Activated CD4-positive, alpha-beta T cell treated with anti-CD3 and anti-CD28 coated beads for 36 hours (primary cell): ENCODE measurements at regions of chr12 and their contacts with region 1.

Region 1: DNA sequence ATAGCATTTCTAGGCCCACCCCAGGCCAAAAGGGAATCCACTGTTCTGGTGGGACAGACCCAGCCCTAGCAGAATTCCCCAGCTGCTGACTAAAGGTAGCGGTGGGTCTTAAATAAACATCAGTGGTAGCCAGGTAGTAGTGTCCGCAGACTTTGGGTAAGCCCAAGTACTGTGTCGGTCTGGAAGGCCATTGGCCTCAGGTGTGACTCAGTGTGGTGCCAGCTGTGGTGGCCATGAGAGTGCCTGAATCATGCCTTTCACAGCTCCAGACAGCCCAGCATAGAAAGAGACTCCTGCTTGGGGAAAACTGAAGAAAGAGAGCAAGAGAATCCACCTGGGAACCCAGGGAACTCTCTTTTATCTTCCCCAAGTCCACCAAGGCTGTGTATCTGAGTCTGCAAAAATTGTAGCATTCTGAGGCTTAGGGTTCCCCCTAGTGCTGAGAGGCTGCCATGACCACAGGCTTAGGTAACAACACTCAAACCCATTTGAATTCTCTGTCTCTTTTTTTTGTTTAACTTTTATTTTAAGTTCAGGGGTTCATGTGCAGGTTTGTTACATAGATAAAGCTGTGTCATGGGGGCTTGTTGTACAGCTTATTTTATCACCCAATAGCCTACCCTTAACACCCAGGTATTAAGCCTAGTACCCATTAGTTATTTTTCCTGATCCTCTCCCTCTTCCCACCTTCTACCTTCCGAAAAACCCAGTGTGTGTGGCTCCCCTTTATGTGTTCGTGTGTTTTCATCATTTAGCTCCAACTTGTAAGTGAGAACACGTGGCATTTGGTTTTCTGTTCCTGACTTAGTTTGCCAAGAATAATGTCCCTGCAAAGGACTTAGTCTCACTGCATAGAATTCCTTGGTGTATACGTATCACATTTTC is 16.7 kb upstream of the CD163L1 start:
- DNase-seq: peak; percentile 71
- ATAC-seq: peak; percentile 79
- H3K4me3 Mint-ChIP-seq: no peak overlapping the region
- H3K27ac Mint-ChIP-seq: no peak overlapping the region
- H3K4me1 Mint-ChIP-seq: no peaks in the 10 kb centered on the region
- H3K27me3 Mint-ChIP-seq: peaks cover 3% of the 10 kb centered on the region

Region 2: DNA sequence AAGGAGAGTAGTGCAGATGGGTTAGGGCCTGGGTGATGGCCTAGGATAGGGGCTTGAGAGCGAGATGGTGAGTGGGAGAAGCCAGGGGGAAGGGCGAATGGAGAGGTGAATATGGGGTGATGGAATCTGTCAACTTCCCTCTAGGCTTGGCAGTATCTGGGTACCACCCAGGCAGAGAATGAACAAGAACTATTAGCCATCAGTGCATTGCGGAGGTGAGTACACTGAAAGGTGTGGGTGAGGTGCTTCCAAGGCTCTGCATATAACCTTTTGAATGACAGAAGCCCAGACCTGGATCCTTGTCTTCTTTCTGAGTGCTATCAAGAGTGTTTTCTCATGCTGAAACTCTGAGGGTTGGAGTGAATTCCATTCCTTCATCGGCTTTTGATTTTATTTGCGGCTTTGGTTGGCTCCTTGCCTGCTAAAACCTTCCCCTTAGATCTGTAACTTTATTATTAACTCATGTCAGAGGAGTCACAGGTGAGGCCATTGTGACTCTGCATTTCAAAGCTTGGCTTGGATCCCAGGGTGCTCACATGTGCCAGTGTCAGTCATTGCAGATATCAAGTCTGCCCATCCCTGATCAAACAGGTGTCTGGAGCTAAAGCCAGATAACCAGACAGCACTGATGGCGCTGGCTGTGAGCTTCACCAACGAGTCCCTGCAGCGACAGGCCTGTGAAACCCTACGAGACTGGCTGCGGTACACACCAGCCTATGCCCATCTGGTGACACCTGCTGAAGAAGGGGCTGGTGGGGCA is 252.6 kb before region 1 on chr12:
- CTCF ChIA-PET with region 1: no interaction called
- POLR2A ChIA-PET with region 1: no interaction called
- intact Hi-C with region 1: no loop called
- DNase-seq: no peak
- ATAC-seq: no peak
- H3K4me3 Mint-ChIP-seq: no peak overlapping the region
- H3K27ac Mint-ChIP-seq: no peak overlapping the region
- H3K4me1 Mint-ChIP-seq: no peaks in the 10 kb centered on the region
- H3K27me3 Mint-ChIP-seq: no peaks in the 10 kb centered on the region

Region 3: DNA sequence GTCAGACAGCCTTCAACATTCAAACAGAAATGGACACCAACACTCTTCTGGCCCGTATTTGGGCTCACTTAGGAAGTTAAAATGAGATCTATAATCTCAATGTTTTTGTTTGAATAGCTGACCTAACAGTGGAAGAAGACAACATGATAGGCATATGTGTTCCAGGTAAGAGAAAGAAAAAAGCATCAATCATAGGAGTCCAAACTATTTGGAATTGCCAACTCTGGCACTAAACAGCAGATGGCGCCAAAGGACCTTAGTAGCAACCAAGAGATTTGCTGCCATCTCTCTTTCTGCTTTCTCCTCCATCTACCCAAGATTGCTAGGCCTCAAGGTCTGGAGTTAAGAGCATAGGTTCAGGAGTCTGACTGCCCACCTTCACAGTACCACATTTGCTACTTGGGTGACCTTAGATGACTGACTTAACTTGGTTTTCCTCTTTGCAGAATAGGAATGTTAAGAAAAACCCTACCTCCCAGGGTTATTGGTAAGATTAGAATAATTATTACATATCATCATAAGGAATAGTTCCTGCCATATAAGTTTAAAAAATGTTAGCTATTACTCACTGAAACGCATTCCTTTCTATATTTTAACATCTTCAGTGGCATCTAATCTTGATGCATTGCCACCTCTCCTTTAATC is 240.9 kb before region 1 on chr12:
- CTCF ChIA-PET with region 1: interaction called, 8 read pairs
- POLR2A ChIA-PET with region 1: no interaction called
- intact Hi-C with region 1: loop called (anchors 1 kb)
- DNase-seq: peak; percentile 85
- ATAC-seq: peak; percentile 66
- H3K4me3 Mint-ChIP-seq: no peak overlapping the region
- H3K27ac Mint-ChIP-seq: no peak overlapping the region
- H3K4me1 Mint-ChIP-seq: no peaks in the 10 kb centered on the region
- H3K27me3 Mint-ChIP-seq: no peaks in the 10 kb centered on the region

Region 4: DNA sequence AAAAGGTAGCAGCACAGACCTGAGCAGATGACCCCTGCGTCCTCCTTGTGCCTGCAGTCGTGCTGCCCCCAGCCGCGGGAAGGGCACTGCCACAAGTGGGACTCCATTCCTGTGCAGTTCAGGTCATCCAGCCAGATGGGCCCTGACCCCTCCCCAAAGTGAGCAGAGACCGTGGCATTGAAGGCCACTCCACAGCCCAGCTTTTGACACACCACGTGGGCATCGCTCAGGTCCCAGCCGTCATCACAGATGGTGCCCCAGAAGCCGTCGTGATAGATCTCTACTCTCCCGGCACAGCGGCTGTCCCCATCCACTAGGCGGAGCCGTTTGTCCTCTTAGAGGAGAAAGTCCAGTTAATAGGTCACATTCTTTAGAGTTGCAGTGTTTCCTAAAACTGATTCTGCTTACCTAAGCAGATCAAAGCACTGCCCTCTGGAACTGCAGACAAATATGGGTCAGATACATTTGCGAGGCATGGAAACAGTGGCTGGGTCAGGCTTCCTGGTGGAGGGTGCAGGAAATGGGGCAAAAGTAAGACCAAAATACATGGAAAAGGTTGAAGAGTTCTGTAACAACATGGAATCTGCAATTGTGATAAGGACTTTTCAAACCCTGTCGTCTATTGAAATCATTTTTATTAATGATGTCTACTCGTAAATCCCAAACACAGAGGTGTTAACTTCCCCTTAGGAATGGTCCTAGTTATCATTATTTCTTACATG is 86.0 kb before region 1 on chr12:
- CTCF ChIA-PET with region 1: no interaction called
- POLR2A ChIA-PET with region 1: no interaction called
- intact Hi-C with region 1: loop called in 1 of 2 experiments (anchors 5 kb)
- DNase-seq: peak; percentile 59
- ATAC-seq: no peak
- H3K4me3 Mint-ChIP-seq: no peak overlapping the region
- H3K27ac Mint-ChIP-seq: no peak overlapping the region
- H3K4me1 Mint-ChIP-seq: no peaks in the 10 kb centered on the region
- H3K27me3 Mint-ChIP-seq: peaks cover 16% of the 10 kb centered on the region

Region 5: DNA sequence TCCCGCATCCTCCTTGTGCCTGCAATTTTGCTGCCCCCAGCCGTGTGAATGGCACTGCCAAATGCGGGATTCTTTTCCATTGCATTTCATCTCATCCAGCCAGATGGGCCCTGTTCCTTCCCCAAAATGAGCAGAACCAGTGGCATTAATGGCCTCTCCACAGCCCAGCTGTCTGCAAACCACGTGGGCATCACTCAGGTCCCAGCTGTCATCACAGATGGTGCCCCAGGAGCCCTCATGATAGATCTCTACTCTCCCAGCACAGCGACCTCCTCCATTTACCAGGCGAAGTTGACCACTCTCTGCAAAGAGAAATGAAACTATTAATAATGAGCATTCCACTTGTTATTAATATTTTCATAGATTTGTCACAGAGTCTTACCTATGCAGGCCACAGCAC is 25.9 kb after region 1 on chr12:
- CTCF ChIA-PET with region 1: no interaction called
- POLR2A ChIA-PET with region 1: no interaction called
- intact Hi-C with region 1: no loop called
- DNase-seq: no peak
- ATAC-seq: no peak
- H3K4me3 Mint-ChIP-seq: no peak overlapping the region
- H3K27ac Mint-ChIP-seq: no peak overlapping the region
- H3K4me1 Mint-ChIP-seq: no peaks in the 10 kb centered on the region
- H3K27me3 Mint-ChIP-seq: peaks cover 8% of the 10 kb centered on the region